ENCODE measurements at regions of chr12 and their contacts with region 1.

Region 1: GRCh38 chr12:53952871-53953734 is 1.6 kb upstream of the HOXC12 start:
- DNase-seq: peak; percentile 54

Region 2: GRCh38 chr12:53938326-53939140 is 14.6 kb before region 1 on chr12 and contains the start of gene HOXC13:
- CTCF ChIA-PET with region 1: interaction called, 3 read pairs
- POLR2A ChIA-PET with region 1: interaction called, 14 read pairs
- DNase-seq: peak; percentile 98

Region 3: GRCh38 chr12:53963434-53964314 is 10.6 kb after region 1 on chr12:
- CTCF ChIA-PET with region 1: interaction called, 7 read pairs
- POLR2A ChIA-PET with region 1: interaction called, 11 read pairs
- DNase-seq: peak; percentile 38

Region 4: DNA sequence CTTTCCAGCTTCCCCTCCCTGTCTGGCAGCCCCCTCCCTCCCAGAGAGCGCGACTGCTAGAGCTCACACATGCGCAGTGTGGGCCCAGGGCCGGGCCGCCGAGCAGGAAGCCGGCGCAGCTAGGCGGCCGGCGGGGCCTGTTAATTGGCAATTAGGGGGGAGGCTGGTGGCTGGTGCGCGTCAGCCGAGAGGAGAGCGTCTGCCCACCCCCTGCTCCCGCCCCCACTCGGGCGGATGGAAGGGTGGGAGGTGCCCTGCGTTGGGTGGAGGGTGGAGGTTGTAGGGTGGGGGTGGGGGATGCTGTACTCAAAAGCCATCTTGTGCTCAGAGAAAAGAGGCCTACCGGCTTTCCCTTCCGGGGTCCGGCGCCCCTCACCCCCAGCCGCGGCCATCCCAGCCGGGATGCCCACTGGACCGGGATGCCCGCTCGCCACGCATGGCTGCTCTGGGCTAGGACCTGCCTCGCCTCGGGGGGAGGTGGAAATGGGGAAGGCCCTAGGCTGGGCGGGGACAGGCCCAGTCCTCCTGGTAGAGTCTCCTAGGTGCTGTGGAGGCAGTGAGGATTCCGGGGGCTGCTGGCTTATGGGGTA is 64.9 kb after region 1 on chr12:
- CTCF ChIA-PET with region 1: no interaction called
- POLR2A ChIA-PET with region 1: no interaction called
- DNase-seq: peak; percentile 90

Measured in HEK293T (cell line).